ENCODE measurements at regions of chr4 and their contacts with region 1.

Region 1: DNA sequence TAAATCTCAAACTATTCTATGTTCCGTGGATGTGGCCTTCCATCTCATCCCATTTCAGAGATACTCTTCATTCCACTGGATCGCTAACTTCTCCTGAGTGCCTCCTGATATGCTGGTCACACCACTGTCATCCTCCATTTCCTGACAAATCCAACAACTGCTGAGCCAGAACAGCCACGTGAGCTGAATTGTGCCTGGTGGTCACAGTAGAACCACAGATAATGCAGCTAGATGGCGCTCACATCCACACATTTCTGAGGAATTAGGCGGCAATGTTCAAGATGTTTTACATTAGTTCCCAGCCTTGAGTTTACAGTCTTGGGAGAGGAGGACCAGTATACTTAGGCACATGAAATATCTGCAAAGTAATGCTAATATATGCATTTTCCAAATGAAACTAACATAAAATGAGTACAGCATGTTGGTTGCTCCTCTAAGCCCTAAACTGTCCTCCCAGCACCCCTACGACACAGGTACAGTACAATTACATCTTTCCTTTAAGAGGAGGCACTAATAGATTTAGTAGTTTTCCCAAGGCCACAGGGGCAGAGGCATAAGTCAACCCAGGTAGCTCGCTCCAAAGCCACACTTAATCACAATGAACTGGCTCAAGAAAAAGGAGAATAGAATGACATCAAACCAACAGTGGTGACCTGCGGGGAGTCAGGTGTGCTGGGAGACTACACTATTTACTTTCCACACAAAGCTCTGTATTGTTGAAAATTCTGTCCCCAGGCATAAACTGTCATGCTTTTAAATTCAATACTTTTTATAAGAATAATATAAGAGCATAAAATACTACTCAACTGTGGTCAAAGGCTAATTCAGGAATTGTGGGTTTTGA is 134.2 kb downstream of the CHIC2 start:
- DNase-seq: peak; percentile 82 to 85
- H3K4me3 ChIP-seq: no peak overlapping the region
- H3K27ac ChIP-seq: no peak overlapping the region
- H3K4me1 ChIP-seq: peaks cover 0 to 19% (median 10%) of the 10 kb centered on the region in 4 donors
- H3K27me3 ChIP-seq: no peaks in the 10 kb centered on the region
- CTCF ChIP-seq: peak; percentile 68 to 87

Region 2: DNA sequence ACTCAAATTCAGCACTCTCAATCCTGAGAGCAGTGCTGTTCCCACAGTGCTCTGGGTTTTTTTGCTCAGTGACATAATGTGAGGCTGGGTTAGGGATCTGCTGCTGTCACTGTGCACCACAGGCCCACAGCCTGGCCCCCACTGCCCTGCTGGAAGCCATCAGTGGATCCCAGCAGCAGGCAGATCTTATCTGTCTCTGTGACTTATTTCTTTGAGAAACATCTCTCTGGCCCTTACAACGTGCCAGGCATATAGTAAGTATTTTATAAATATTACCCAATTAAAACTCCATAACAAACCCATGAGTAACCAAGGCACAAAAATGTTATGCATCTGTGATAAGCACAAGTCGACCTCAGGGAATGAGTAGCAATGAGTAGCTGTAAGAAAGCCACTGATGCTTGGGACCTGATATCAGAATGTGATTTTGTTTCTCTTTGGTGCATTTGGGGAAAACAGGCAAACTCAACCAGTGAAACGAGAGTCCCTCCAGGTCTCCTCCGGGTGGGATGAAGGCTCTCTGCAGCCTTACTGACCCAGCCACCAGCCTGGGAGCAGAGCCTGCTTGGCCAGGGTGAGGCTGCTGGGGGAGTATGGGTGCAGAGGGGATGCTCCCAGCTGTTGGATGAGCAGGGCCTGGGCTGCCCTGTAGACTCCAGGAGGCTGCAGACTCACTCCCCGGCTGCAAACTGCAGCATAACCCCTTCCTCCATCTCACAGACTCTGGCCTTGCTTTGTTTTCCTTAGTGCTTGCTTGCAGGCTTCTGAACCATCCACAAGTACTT is 166.2 kb before region 1 on chr4:
- intact Hi-C with region 1: no loop called
- DNase-seq: no peak
- H3K4me3 ChIP-seq: no peak overlapping the region
- H3K27ac ChIP-seq: peak overlapping the region in 1 of 2 donors; percentile 17
- H3K4me1 ChIP-seq: peaks cover 0 to 22% (median 0%) of the 10 kb centered on the region in 4 donors
- H3K27me3 ChIP-seq: no peaks in the 10 kb centered on the region
- CTCF ChIP-seq: no peak

Region 3: GRCh38 chr4:54217642-54218495 is 287.7 kb after region 1 on chr4:
- intact Hi-C with region 1: loop called (anchors 5 kb)
- DNase-seq: peak; percentile 81 to 84
- H3K4me3 ChIP-seq: peak overlapping the region; percentile 43 to 55
- H3K27ac ChIP-seq: peak overlapping the region in 1 of 2 donors; percentile 32
- H3K4me1 ChIP-seq: peaks cover 0 to 9% (median 6%) of the 10 kb centered on the region in 4 donors
- H3K27me3 ChIP-seq: peaks cover 0 to 5% of the 10 kb centered on the region in 2 donors
- CTCF ChIP-seq: peak; percentile 88 to 93

Region 4: GRCh38 chr4:54228056-54228527 is 297.9 kb after region 1 on chr4:
- intact Hi-C with region 1: loop called (anchors 5 kb)
- DNase-seq: peak; percentile 75 to 88
- H3K4me3 ChIP-seq: peak overlapping the region; percentile 58 to 69
- H3K27ac ChIP-seq: peak overlapping the region; percentile 73 to 82
- H3K4me1 ChIP-seq: peaks cover 15 to 73% (median 53%) of the 10 kb centered on the region in 4 donors
- H3K27me3 ChIP-seq: peaks cover 3 to 95% of the 10 kb centered on the region in 2 donors
- CTCF ChIP-seq: peak; percentile 59 to 61